ENCODE measurements at regions of chr16 and their contacts with region 1.

Region 1: GRCh38 chr16:24041826-24042631 is 206.2 kb downstream of the PRKCB start:
- DNase-seq: peak; percentile 57
- ATAC-seq: peak; percentile 38

Region 2: GRCh38 chr16:24253192-24253591 is 211.2 kb after region 1 on chr16:
- intact Hi-C with region 1: no loop called
- DNase-seq: peak; percentile 55
- ATAC-seq: no peak

Region 3: DNA sequence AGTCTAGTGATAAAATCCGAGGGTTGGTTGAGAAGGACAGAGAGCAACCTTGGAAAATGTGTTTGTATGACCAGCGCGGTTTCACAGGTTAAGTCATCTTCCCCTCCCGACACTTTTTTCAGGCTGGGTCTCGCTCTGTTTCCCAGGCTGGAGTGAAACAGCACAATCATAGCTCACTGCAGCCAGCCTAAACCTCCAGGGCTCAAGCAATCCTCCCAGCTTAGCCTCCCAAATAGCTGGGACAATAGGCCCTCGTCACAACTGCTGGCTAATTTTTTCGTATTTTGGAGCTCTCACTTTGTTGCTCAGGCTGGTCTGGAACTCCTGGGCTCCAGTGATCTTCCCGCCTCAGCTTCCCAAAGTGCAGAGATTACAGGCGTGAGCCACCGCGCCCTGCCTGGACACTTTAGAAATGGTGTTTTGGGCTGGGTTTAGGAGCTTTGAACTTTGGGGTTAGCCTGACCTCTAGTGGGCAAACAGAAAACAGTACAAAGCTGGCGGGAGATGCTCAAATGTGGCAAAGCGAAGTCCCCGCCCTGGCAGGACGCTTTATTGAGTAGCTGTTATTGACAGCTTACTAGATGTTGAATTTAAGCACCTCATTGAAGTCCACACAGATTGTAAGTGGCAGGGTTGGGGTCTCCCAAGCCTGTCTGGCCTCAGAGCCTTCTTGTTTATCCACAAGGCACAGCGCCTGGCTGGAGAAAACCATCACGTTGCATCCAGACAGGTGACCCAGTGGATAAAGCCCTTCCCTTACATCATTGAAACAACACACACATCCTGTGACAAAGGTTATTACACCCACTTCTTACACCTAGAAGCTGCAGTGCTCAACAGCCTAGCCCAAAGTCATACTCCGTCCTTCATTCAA is 462.7 kb after region 1 on chr16:
- intact Hi-C with region 1: loop called (anchors 5 kb)
- DNase-seq: peak; percentile 50
- ATAC-seq: peak; percentile 89

Measured in Right ventricle myocardium superior (tissue), 1 donor.